ENCODE measurements at regions of chr2 and their contacts with region 1.

Region 1: GRCh38 chr2:58019209-58019608 is 27.4 kb upstream of the VRK2 start:
- DNase-seq: no peak
- ATAC-seq: peak; percentile 81
- H3K4me3 ChIP-seq: no peak overlapping the region
- H3K27ac ChIP-seq: no peak overlapping the region
- H3K4me1 ChIP-seq: peaks cover 12% of the 10 kb centered on the region; the same call in 1 of the 2 replicates
- H3K27me3 ChIP-seq: no peaks in the 10 kb centered on the region
- CTCF ChIP-seq: no peak
- EP300 ChIP-seq: peak; percentile 56
- POLR2A ChIP-seq: no peak
- RAD21 ChIP-seq: no peak

Region 2: GRCh38 chr2:58032016-58032763 is 13.0 kb after region 1 on chr2:
- CTCF ChIA-PET with region 1: interaction called, 5 read pairs
- POLR2A ChIA-PET with region 1: interaction called, 9 read pairs
- RAD21 ChIA-PET with region 1: interaction called, 8 read pairs
- SMC1A ChIA-PET with region 1: interaction called, 14 read pairs
- in situ Hi-C with region 1: no loop called
- intact Hi-C with region 1: loop called (anchors 2 kb)
- DNase-seq: no peak
- ATAC-seq: peak; percentile 83
- H3K4me3 ChIP-seq: 0 out of 2 replicates have a peak overlapping the region, but pooled peaks have one; percentile 1
- H3K27ac ChIP-seq: peak overlapping the region; percentile 39
- H3K4me1 ChIP-seq: peaks cover 40% of the 10 kb centered on the region
- H3K27me3 ChIP-seq: no peaks in the 10 kb centered on the region
- CTCF ChIP-seq: no peak
- EP300 ChIP-seq: no peak
- POLR2A ChIP-seq: no peak
- RAD21 ChIP-seq: no peak

Region 3: GRCh38 chr2:58039170-58039611 is 20.0 kb after region 1 on chr2:
- CTCF ChIA-PET with region 1: interaction called, 4 read pairs
- POLR2A ChIA-PET with region 1: interaction called, 17 read pairs
- RAD21 ChIA-PET with region 1: interaction called, 10 read pairs
- SMC1A ChIA-PET with region 1: interaction called, 83 read pairs
- in situ Hi-C with region 1: no loop called
- intact Hi-C with region 1: loop called (anchors 2 kb)
- DNase-seq: no peak
- ATAC-seq: peak; percentile 67
- H3K4me3 ChIP-seq: peak overlapping the region; percentile 24; the same call in 1 of the 2 replicates
- H3K27ac ChIP-seq: peak overlapping the region; percentile 79
- H3K4me1 ChIP-seq: peaks cover 41% of the 10 kb centered on the region
- H3K27me3 ChIP-seq: no peaks in the 10 kb centered on the region
- CTCF ChIP-seq: no peak
- EP300 ChIP-seq: peak in 1 of 2 experiments; percentile 59; a peak in 1 of 4 replicates
- POLR2A ChIP-seq: no peak
- RAD21 ChIP-seq: no peak

Region 4: DNA sequence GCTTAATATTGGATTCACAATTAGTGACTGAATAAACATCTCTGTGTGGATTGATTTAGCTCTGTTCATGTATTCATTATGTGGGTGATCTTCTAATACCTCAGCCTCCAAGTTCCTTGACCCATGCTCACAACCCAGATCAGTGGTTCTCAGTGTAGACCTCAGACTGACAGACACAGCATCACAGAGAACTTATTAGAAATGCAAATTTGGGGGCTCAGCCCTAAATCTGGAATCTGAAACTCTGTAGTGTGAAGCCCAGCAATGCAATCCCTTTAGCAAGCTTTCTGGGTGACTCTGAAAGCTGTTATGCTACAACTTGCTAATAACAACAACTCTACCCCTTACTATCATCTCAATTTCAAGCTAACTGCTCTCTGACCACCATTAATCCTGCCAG is 495.0 kb after region 1 on chr2:
- CTCF ChIA-PET with region 1: no interaction called
- POLR2A ChIA-PET with region 1: no interaction called
- RAD21 ChIA-PET with region 1: no interaction called
- SMC1A ChIA-PET with region 1: no interaction called
- in situ Hi-C with region 1: no loop called
- intact Hi-C with region 1: no loop called
- DNase-seq: no peak
- ATAC-seq: no peak
- H3K4me3 ChIP-seq: no peak overlapping the region
- H3K27ac ChIP-seq: no peak overlapping the region
- H3K4me1 ChIP-seq: peaks cover 3% of the 10 kb centered on the region; the same call in 1 of the 2 replicates
- H3K27me3 ChIP-seq: no peaks in the 10 kb centered on the region
- CTCF ChIP-seq: no peak
- EP300 ChIP-seq: no peak
- POLR2A ChIP-seq: no peak
- RAD21 ChIP-seq: no peak

Measured in GM12878 (cell line).